ENCODE measurements at regions of chr11 and their contacts with region 1.

Region 1: DNA sequence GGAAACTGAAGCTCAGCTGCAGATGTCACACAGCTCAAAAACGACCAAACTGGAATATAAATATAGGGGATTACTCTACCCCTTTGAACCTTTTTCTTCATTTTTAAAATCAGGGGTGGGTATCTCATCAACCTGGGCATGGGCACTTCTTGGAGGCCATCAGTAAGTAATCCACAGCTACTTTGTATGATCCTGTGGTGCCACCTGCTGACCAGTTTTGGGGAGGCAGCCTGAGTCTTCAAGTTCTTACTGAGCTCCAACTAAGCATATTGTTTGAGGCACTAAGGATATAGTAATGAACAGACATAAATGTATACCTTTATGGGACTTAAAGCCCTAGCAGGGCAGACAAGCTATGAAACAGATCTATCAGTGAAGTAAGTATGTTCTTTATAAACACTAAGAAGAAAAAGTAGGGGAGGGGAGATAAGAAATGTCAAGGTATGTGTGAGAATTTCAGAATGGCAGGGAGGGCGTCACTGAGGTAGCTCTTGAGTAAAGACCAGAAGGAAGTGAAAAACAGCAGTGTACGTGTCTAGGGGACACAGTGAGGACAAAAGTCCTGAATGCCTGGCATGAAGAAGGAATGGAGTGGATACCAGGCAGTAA is 18.4 kb downstream of the TUB start:
- DNase-seq: peak in 1 of 2 experiments; percentile 87
- H3K4me3 ChIP-seq: no peak overlapping the region
- H3K27ac ChIP-seq: no peak overlapping the region
- H3K4me1 ChIP-seq: no peaks in the 10 kb centered on the region
- H3K27me3 ChIP-seq: no peaks in the 10 kb centered on the region; a peak in 1 of 7 replicates
- CTCF ChIP-seq: peak; percentile 54 to 75 (median 73)
- EP300 ChIP-seq: no peak
- POLR2A ChIP-seq: no peak
- RAD21 ChIP-seq: peak; percentile 83 to 88

Region 2: DNA sequence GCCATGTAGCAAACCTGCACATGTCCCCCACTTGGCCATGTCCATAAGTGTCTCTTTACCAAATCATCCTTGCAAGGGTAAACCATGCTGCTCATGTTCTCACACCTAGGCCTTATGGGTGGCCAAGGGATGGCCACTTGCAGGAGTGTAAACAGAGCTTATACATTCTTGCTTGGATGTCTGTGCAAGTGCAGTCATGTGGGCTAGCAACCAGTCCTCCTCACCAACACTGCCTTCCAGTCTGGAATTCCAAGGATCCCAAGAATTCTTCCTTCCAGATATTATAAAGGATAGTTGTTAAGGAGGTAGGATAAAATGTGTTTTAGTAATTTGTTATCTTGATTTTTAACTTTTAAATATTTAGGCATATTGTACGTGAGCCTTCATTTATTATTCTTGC is 254.9 kb before region 1 on chr11:
- CTCF ChIA-PET with region 1: no interaction called
- POLR2A ChIA-PET with region 1: no interaction called
- DNase-seq: no peak
- H3K4me3 ChIP-seq: no peak overlapping the region
- H3K27ac ChIP-seq: no peak overlapping the region
- H3K4me1 ChIP-seq: 0 out of 7 replicates have a peak, but pooled peaks cover 0 to 5% (median 0%) of the 10 kb centered on the region in 4 experiments
- H3K27me3 ChIP-seq: no peaks in the 10 kb centered on the region
- CTCF ChIP-seq: no peak
- EP300 ChIP-seq: no peak
- POLR2A ChIP-seq: no peak
- RAD21 ChIP-seq: no peak

Region 3: GRCh38 chr11:7936615-7937014 is 162.8 kb before region 1 on chr11:
- CTCF ChIA-PET with region 1: no interaction called
- POLR2A ChIA-PET with region 1: no interaction called
- DNase-seq: no peak
- H3K4me3 ChIP-seq: no peak overlapping the region
- H3K27ac ChIP-seq: no peak overlapping the region
- H3K4me1 ChIP-seq: no peaks in the 10 kb centered on the region
- H3K27me3 ChIP-seq: no peaks in the 10 kb centered on the region
- CTCF ChIP-seq: no peak
- EP300 ChIP-seq: no peak
- POLR2A ChIP-seq: no peak
- RAD21 ChIP-seq: no peak

Region 4: DNA sequence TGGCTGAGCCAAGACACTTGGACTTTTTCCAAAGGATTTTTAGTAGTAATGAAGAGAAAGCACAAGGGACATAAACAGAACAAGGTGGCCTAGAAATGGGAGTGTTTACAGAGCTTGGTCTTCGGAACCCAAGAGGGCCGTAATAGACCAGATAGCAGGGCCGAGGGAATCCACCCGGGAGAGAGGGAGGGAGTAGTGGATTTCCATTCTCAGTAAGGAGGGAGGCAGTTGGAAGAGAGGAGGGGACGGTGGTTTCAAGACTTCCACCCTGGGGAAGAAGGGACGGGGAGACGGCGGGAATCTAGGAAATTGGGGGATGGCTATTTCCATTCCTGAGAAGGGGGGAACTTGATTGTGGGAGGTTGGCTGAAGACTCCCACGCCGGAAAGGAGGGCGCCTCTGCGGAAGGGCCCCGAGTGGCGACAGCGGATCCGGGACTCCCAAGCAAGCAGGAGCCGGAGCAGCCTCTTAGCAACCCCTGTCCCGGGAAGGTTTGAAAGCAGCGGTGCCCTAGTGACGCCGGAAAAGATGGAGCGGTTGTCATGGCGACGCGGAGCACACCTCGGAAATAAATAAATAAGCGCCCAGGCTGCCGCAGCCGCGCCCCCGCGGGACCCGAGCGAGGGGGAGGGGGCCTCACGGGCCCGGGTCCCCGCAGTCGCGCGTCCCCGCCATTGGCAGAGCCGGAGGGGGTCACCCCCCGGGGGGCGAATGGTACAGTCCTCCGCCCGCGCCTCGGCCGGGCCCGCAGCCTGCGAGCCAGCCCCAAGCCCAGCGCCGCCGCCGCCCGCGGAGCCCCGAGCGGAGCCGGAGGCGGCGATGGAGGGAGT is 80.7 kb before region 1 on chr11:
- CTCF ChIA-PET with region 1: interaction called, 69 read pairs
- POLR2A ChIA-PET with region 1: interaction called, 3 read pairs
- DNase-seq: peak in 1 of 2 experiments; percentile 87
- H3K4me3 ChIP-seq: peak overlapping the region; percentile 56 to 68 (median 61)
- H3K27ac ChIP-seq: no peak overlapping the region
- H3K4me1 ChIP-seq: peaks cover 6 to 17% (median 13%) of the 10 kb centered on the region in 4 experiments; a peak in 6 of 7 replicates
- H3K27me3 ChIP-seq: peaks cover 14 to 59% (median 52%) of the 10 kb centered on the region in 4 experiments
- CTCF ChIP-seq: no peak
- EP300 ChIP-seq: peak in 1 of 2 experiments; percentile 67; a peak in 1 of 3 replicates
- POLR2A ChIP-seq: no peak; a peak in 1 of 3 replicates
- RAD21 ChIP-seq: no peak

Region 5: GRCh38 chr11:8056810-8057463 is 42.5 kb before region 1 on chr11:
- CTCF ChIA-PET with region 1: interaction called, 1,283 read pairs
- POLR2A ChIA-PET with region 1: interaction called, 3 read pairs
- DNase-seq: peak in 1 of 2 experiments; percentile 36
- H3K4me3 ChIP-seq: no peak overlapping the region
- H3K27ac ChIP-seq: no peak overlapping the region
- H3K4me1 ChIP-seq: peaks cover 0 to 5% (median 0%) of the 10 kb centered on the region in 4 experiments; a peak in 2 of 7 replicates
- H3K27me3 ChIP-seq: no peaks in the 10 kb centered on the region
- CTCF ChIP-seq: no peak
- EP300 ChIP-seq: no peak
- POLR2A ChIP-seq: no peak
- RAD21 ChIP-seq: no peak

Region 6: DNA sequence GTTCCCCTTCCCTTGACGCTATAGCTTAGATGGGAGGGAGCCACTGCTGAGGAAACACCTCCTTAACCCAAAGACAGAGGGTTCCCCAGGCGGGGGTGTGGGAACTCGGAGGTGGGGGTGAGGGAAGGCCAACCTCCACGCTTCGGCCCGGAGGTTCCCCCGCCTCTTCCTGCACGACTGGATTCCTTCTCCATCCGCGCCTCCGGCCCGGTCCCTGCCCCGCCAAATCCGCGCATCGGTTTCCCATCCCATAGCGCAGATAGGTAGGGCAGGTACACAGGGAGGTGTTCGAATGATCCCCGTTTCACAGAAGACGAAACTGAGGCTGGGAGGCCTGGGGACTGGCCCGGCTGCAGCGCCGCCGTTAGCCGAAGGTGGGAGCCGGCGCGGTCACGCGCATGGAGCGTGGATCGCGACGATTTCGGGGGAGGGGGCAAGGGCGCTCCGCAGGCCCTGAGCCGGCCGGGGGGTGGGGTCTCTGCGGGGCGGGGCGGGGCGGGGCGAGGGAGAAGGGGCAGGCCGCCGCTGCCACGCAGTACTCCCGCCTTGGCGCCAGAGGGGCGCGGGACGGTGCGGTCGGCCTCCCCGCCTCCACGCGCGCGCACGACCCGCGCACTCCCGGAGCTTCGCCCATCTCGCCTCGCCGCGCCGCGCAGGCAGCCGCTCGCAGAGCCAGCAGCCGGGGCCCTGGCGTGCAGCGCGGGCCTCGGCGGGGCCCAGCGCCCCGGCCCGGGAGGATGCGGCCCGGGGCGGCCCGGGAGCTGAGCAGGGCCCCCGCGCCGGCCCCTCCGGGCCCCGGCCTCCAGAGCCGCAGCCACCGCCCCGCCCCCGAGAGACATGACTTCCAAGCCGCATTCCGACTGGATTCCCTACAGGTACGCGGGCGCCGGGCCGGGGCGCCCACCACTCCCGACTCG is 18.5 kb before region 1 on chr11 and contains the start of gene TUB:
- CTCF ChIA-PET with region 1: interaction called, 225 read pairs
- POLR2A ChIA-PET with region 1: interaction called, 9 read pairs
- DNase-seq: peak in 1 of 2 experiments; percentile 77
- H3K4me3 ChIP-seq: peak within 1 kb of the TSS; percentile 41 to 73 (median 51)
- H3K27ac ChIP-seq: no peak within 1 kb of the TSS
- H3K4me1 ChIP-seq: peaks cover 10 to 46% (median 31%) of the 10 kb centered on the region in 4 experiments
- H3K27me3 ChIP-seq: peaks cover 0 to 18% (median 13%) of the 10 kb centered on the region in 4 experiments; a peak in 5 of 7 replicates
- CTCF ChIP-seq: no peak
- EP300 ChIP-seq: no peak
- POLR2A ChIP-seq: no peak
- RAD21 ChIP-seq: no peak
- total RNA-seq, gene TUB: 29.9 and 31.3 TPM in 2 replicates

Region 7: DNA sequence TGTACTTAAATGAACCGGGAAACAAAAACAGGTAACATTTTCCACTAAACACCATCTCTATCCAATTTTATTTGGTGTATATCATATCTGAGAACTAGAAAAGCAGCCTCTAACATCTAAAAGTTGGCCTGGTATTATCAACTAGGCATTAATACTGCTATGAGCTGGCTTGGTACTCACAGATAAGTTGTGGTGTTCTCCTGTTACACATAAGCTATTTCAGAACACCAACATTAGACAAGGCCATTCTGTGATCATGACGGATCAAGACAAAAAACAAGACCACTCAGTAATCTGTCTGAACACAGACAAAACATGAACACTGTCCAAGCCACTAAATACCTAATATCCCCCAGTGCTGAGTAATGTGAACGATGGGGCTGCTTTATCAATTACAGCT is 57.5 kb after region 1 on chr11:
- CTCF ChIA-PET with region 1: interaction called, 12 read pairs
- POLR2A ChIA-PET with region 1: no interaction called
- DNase-seq: no peak
- H3K4me3 ChIP-seq: no peak overlapping the region
- H3K27ac ChIP-seq: no peak overlapping the region
- H3K4me1 ChIP-seq: no peaks in the 10 kb centered on the region
- H3K27me3 ChIP-seq: no peaks in the 10 kb centered on the region
- CTCF ChIP-seq: no peak
- EP300 ChIP-seq: no peak
- POLR2A ChIP-seq: no peak
- RAD21 ChIP-seq: no peak